ENCODE measurements at regions of chr17 and their contacts with region 1.

Region 1: DNA sequence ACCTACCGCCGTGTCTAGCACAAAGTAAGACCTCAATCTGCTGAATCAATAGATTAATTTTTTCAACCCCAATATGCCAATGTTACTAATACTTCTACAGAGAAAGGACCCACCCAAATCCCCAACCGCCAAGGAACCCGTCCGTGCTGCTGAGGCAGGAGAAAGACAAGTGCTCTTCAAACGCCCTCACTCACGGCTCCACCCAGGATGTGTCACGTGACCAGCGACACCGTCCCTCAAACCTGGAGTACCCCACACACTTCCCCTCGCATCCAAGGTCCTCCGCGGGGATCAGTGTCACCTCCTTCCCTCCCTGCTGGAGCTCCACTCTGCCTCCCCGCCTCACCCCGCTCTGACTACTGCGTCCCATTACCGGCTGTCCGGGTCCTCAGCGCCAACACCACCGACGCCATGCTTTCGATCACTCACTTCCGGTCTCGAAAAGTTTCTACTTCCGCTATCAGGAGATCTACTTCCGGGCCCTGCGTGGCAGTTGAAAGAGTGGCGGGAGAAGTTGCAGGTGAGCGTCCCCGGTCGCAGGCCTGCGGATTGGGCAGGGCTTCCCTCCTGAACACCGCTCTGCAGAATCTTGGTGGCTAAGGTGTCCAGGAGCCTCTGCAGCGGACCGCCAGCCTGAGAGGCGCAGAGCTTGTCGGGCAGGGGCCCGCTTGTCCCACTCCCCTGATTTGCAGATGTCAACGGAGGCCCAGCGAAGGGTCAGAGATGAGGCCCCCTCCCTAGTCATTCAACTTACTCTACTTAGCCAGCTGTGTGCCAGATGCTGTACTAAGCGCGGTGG is at the starts of genes EME1 and MRPL27:
- DNase-seq: peak; percentile 95
- ATAC-seq: peak; percentile 92
- H3K4me3 ChIP-seq: peak within 1 kb of the TSS; percentile 88
- H3K27ac ChIP-seq: peak within 1 kb of the TSS; percentile 89
- H3K4me1 ChIP-seq: peaks cover 14% of the 10 kb centered on the region
- H3K27me3 ChIP-seq: no peaks in the 10 kb centered on the region
- CTCF ChIP-seq: no peak
- total RNA-seq, gene EME1: 20.0 and 28.0 TPM in 2 replicates
- total RNA-seq, gene MRPL27: 168 and 173 TPM in 2 replicates

Region 2: DNA sequence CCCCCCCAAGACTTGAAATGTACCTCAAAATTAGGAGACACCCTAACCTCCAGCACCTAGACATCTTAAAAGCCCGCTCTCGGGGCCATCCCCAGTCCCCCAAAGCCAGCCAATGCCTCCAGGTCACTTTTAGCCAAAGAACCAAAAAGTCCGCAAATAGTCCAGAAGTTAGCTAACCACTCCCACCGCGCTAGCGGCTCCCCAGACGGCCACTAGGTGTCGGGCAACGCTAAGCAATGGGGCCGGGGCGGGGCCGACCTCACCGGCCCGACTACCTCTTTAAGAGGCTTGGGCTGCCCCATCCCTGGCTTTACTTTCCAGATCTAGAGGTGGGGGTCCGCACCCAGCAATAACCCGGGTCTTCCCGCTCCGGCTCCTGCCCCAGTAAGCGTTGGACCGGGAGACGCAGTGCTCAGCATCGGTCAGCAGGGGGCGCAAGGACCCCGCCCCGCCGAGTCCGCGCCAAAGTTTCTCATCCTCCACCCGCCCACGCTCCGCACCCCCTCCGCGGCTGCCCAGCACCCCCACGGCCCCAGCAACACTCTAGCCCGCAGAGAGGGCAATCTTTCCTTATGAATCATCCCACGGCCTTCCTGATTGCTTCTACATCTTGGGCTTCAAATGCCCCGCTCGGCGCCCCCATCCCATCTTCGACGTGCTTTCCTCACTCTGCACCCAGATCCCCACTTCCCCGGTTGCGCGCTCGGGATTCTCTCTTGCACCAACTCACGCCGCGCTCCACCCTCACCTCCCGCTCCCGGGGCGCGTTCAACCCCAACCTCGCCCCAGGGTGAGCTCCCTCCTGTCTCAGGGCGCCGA is 172.3 kb before region 1 on chr17:
- CTCF ChIA-PET with region 1: no interaction called
- POLR2A ChIA-PET with region 1: no interaction called
- intact Hi-C with region 1: no loop called
- DNase-seq: peak; percentile 93
- ATAC-seq: peak; percentile 74
- H3K4me3 ChIP-seq: peak overlapping the region; percentile 69
- H3K27ac ChIP-seq: peak overlapping the region; percentile 92
- H3K4me1 ChIP-seq: peaks cover 18% of the 10 kb centered on the region
- H3K27me3 ChIP-seq: 0 out of 2 replicates have a peak, but pooled peaks cover 6% of the 10 kb centered on the region
- CTCF ChIP-seq: peak; percentile 100

Region 3: GRCh38 chr17:50501054-50501453 is 128.1 kb after region 1 on chr17:
- CTCF ChIA-PET with region 1: no interaction called
- POLR2A ChIA-PET with region 1: interaction called, 14 read pairs
- intact Hi-C with region 1: no loop called
- DNase-seq: peak; percentile 76
- ATAC-seq: no peak
- H3K4me3 ChIP-seq: no peak overlapping the region
- H3K27ac ChIP-seq: no peak overlapping the region
- H3K4me1 ChIP-seq: peaks cover 8% of the 10 kb centered on the region
- H3K27me3 ChIP-seq: no peaks in the 10 kb centered on the region
- CTCF ChIP-seq: peak; percentile 60

Region 4: DNA sequence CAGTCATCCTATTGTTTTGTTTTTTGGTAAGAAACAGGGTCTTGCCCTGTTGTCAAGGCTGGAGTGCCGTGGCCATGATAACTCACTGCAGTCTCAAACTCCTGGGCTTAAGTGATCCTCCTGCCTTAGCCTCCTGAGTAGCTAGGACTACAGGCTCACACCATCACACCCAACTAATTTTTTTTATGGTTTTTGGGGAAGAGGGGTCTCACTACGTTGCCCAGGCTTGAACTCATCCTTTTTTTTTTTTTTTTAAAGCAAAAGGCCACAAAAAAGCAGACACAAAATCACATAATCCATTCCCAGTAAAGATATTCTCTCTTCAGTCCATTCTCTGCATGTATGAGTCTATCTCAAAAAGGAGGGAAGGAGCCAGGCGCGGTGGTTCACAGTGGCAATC is 742.2 kb after region 1 on chr17:
- CTCF ChIA-PET with region 1: no interaction called
- POLR2A ChIA-PET with region 1: interaction called, 12 read pairs
- intact Hi-C with region 1: no loop called
- DNase-seq: no peak
- ATAC-seq: no peak
- H3K4me3 ChIP-seq: no peak overlapping the region
- H3K27ac ChIP-seq: no peak overlapping the region
- H3K4me1 ChIP-seq: peaks cover 15% of the 10 kb centered on the region
- H3K27me3 ChIP-seq: no peaks in the 10 kb centered on the region
- CTCF ChIP-seq: no peak

Measured in PC-3 (cell line).